Activated CD8-positive, alpha-beta T cell treated with anti-CD3 and anti-CD28 coated beads, Interleukin-2, amount 10 ng/mL, durations not matched to agents 7 days and 5 days (primary cell): ENCODE measurements at regions of chr20 and their contacts with region 1.

Region 1: GRCh38 chr20:24934101-24934661 is 14.9 kb upstream of the CST7 start:
- DNase-seq: peak; percentile 17
- ATAC-seq: no peak
- H3K4me3 Mint-ChIP-seq: no peak overlapping the region
- H3K27ac Mint-ChIP-seq: no peak overlapping the region
- H3K4me1 Mint-ChIP-seq: peaks cover 32% of the 10 kb centered on the region
- H3K27me3 Mint-ChIP-seq: no peaks in the 10 kb centered on the region

Region 2: DNA sequence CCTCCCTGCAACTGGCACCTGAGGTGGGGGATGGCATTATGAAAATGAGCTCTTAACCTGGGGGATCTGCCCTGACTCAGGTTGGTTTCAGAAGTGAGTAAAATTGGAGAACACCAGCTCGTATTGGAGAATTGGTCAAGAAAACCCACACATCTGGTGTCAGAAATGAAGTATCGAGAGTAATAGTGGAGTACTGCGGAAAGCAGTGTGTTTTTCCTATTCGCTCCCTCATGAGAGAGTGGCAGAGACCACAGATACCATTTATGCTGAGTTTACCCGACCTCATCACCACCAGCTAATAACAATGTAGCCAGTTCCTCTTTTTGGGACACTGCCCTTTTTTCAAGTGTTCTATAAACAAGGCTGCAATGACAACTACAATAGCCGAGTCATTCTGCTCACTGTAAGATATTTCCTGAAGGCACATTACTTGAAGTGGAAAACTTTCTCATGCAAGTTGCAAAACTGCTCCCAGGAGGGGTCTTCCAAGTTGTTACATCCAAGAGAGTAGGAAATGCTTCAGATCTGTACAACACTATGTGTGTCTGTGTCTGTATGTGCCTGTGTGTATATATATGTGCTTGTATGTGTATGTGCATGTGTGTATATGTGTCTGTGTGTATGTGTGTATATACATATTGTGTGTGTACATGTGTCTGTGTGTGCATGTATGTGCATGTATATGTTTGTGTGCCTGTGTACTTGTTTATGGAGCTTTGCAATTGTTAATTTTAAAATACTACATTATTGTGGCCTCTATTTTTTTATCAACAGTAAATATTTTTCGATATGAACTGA is 91.1 kb before region 1 on chr20:
- CTCF ChIA-PET with region 1: no interaction called
- POLR2A ChIA-PET with region 1: no interaction called
- DNase-seq: no peak
- ATAC-seq: no peak
- H3K4me3 Mint-ChIP-seq: no peak overlapping the region
- H3K27ac Mint-ChIP-seq: no peak overlapping the region
- H3K4me1 Mint-ChIP-seq: no peaks in the 10 kb centered on the region
- H3K27me3 Mint-ChIP-seq: peaks cover 36% of the 10 kb centered on the region

Region 3: DNA sequence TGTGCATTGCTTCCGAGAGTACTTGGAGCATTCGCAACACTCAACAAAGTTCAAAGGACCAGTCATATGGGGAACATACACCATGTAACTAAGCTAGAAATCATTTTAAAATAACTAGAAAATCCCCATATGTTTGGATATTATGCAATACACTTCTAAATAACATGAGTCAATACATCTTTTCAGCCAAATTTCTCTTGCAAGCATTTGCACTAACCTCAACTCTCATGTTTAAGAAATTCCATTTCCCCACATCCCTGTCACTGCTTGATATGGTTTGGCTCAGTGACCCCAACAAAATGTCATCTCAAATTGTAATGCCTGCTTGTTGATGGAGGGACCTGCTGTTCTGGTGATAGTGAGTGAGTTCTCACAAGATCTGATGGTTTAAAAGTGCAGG is 70.8 kb before region 1 on chr20:
- CTCF ChIA-PET with region 1: no interaction called
- POLR2A ChIA-PET with region 1: no interaction called
- DNase-seq: no peak
- ATAC-seq: no peak
- H3K4me3 Mint-ChIP-seq: no peak overlapping the region
- H3K27ac Mint-ChIP-seq: no peak overlapping the region
- H3K4me1 Mint-ChIP-seq: peaks cover 14% of the 10 kb centered on the region
- H3K27me3 Mint-ChIP-seq: no peaks in the 10 kb centered on the region

Region 4: DNA sequence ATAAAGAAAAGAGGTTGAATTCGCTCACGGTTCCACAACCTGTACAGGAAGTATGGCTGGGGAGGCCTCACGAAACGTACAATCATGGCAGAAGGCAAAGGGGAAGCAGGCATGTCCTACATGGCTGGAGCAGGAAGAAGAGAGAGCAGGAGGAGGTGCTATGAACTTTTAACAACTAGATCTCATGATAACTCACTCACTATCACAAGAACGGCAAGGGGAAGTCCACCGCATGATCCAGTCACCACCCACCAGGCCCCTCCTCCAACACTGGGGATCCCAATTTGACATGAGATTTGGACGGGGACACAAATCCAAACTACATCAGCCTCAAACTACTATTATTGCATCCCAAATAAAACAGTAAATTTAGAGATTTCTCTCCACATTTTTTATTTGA is 38.8 kb before region 1 on chr20:
- CTCF ChIA-PET with region 1: no interaction called
- POLR2A ChIA-PET with region 1: no interaction called
- DNase-seq: no peak
- ATAC-seq: no peak
- H3K4me3 Mint-ChIP-seq: no peak overlapping the region
- H3K27ac Mint-ChIP-seq: no peak overlapping the region
- H3K4me1 Mint-ChIP-seq: no peaks in the 10 kb centered on the region
- H3K27me3 Mint-ChIP-seq: no peaks in the 10 kb centered on the region

Region 5: DNA sequence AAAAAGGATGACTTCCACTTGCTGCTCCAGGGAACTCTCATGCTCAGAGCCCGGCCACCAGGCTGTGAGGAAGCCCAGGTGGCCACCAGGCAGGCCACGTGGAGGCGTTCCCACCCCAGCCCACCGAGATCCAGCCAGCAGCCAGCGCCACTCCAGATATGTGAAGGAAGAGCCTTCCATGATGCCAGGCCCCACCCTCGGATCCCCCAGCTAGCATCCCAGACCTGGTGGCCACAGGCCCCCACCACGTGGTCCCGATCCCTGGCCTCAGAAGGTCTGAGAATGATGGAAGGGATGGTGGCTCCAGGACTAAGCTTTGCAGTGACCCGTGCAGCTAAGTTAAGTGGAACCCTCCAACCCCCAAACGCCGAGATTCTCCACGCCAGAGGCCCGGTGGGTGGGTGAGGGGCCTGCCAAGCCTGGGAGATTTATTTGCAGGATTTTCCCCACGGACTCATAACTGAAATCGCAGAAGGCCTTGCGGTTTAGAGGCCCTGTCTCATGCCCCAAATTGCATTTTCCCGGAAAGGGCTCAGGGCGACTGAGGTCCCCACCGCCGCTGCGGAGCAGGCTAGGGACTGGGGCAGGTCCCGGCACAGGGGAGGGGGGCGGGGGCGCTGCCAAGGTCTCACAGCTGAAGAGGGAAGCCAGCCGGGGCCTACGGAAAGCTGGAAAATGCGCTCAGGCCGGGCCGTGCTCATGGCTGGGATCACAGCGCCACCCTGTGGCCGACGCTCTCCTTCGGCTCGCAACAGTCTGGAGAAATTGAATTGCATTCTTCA is 16.2 kb before region 1 on chr20:
- CTCF ChIA-PET with region 1: interaction called, 47 read pairs
- POLR2A ChIA-PET with region 1: no interaction called
- DNase-seq: peak; percentile 62
- ATAC-seq: peak; percentile 71
- H3K4me3 Mint-ChIP-seq: no peak overlapping the region
- H3K27ac Mint-ChIP-seq: no peak overlapping the region
- H3K4me1 Mint-ChIP-seq: peaks cover 10% of the 10 kb centered on the region
- H3K27me3 Mint-ChIP-seq: no peaks in the 10 kb centered on the region

Region 6: GRCh38 chr20:24948939-24949679 is 14.9 kb after region 1 on chr20 and contains the start of gene CST7:
- CTCF ChIA-PET with region 1: interaction called, 42 read pairs
- POLR2A ChIA-PET with region 1: interaction called, 5 read pairs
- DNase-seq: peak; percentile 93
- ATAC-seq: peak; percentile 92
- H3K4me3 Mint-ChIP-seq: peak within 1 kb of the TSS; percentile 83
- H3K27ac Mint-ChIP-seq: peak within 1 kb of the TSS; percentile 98
- H3K4me1 Mint-ChIP-seq: peaks cover 75% of the 10 kb centered on the region
- H3K27me3 Mint-ChIP-seq: no peaks in the 10 kb centered on the region
- total RNA-seq, gene CST7: 43.9 to 47.5 TPM

Region 7: DNA sequence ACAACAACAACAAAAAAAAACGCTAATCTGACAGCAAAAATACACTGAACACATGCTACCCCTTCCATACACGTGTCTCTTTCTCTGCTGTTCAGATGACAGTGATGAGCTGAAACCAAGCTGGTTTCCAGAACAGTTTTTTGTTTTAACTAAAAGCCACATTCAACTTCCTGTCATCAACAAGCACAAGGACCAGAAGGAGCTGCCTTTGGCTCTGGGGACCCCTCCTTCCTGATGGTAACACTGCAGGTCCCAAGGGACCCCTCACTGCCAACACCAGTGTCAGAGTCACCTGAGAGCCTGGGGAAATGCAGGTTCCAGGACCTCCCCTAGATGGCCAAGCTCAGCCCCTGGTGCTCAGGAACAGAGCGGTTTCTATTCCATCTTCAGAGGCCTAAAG is 20.9 kb after region 1 on chr20:
- CTCF ChIA-PET with region 1: interaction called, 42 read pairs
- POLR2A ChIA-PET with region 1: interaction called, 5 read pairs
- DNase-seq: peak; percentile 55
- ATAC-seq: peak; percentile 70
- H3K4me3 Mint-ChIP-seq: peak overlapping the region; percentile 45
- H3K27ac Mint-ChIP-seq: peak overlapping the region; percentile 89
- H3K4me1 Mint-ChIP-seq: peaks cover 56% of the 10 kb centered on the region
- H3K27me3 Mint-ChIP-seq: no peaks in the 10 kb centered on the region

Region 8: GRCh38 chr20:24987244-24987643 is 53.1 kb after region 1 on chr20:
- CTCF ChIA-PET with region 1: interaction called, 17 read pairs
- POLR2A ChIA-PET with region 1: no interaction called
- DNase-seq: no peak
- ATAC-seq: no peak
- H3K4me3 Mint-ChIP-seq: no peak overlapping the region
- H3K27ac Mint-ChIP-seq: no peak overlapping the region
- H3K4me1 Mint-ChIP-seq: peaks cover 74% of the 10 kb centered on the region
- H3K27me3 Mint-ChIP-seq: no peaks in the 10 kb centered on the region